Activated naive CD4-positive, alpha-beta T cell treated with anti-CD3 and anti-CD28 coated beads for 36 hours (primary cell): ENCODE measurements at regions of chr3 and their contacts with region 1.

Region 1: DNA sequence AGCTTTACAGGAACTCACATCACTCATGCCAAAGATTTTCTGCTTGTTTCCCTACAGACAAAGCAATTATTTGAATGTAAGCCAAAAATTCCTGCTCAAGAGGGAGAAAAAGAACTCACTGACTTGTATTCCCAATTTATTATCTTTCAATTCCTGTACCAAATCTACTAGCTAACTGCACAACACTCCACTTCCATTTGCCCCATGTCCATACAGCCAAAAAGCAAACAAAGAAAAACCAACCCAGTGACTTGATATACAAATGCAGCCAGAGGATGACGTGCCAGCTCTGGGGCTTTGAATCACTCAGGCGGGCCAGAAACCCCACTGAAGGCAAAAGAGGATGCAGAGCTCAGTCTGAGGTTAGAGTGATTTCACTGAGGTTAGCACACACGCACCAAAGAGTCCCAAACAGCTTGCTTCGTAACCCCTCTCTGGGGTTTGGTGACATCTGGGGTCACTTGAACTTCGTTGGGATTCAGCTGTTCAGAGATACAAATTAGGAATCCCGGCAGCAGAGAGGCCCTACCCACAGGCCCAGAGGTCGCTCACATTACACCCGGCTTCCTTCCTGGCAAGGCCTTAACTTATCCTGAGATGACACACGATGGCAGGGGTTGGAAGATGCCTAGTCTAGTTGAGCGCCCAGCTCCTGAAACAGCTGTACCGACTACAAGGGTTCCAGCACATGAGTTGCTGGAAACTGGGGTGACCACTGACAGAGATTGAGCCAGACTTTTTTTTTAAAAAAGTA is 1.6 kb downstream of the RFTN1 start:
- DNase-seq: peak; percentile 95
- H3K4me3 Mint-ChIP-seq: peak overlapping the region; percentile 92
- H3K27ac Mint-ChIP-seq: peak overlapping the region; percentile 100
- H3K4me1 Mint-ChIP-seq: peaks cover 73% of the 10 kb centered on the region
- H3K27me3 Mint-ChIP-seq: no peaks in the 10 kb centered on the region

Region 2: GRCh38 chr3:15361494-15362212 is 1150.2 kb before region 1 on chr3:
- CTCF ChIA-PET with region 1: no interaction called
- intact Hi-C with region 1: loop called (anchors 2 kb)
- DNase-seq: peak; percentile 86
- H3K4me3 Mint-ChIP-seq: no peak overlapping the region
- H3K27ac Mint-ChIP-seq: peak overlapping the region; percentile 83
- H3K4me1 Mint-ChIP-seq: peaks cover 42% of the 10 kb centered on the region
- H3K27me3 Mint-ChIP-seq: peaks cover 2% of the 10 kb centered on the region

Region 3: DNA sequence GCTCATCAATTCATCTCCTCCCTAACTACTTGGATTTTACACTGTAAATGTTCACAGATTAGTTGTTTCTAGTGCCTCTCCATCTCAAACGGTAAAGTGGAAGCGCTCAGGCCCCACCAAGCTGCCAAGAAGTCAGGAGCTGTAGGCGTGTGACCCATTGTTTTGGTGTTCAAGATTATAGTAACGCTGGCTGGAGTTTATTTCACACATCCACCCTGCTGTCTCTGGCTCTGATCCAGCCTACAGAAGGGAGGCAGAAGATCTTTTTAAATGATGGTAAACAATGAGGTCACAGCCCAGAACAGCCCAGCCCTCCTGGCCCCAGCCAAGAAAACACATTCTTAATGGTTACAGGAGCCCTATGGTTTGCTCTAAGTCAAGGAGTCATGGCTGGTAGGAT is 363.1 kb before region 1 on chr3:
- CTCF ChIA-PET with region 1: no interaction called
- intact Hi-C with region 1: no loop called
- DNase-seq: no peak
- H3K4me3 Mint-ChIP-seq: no peak overlapping the region
- H3K27ac Mint-ChIP-seq: no peak overlapping the region
- H3K4me1 Mint-ChIP-seq: peaks cover 5% of the 10 kb centered on the region
- H3K27me3 Mint-ChIP-seq: peaks cover 4% of the 10 kb centered on the region

Region 4: DNA sequence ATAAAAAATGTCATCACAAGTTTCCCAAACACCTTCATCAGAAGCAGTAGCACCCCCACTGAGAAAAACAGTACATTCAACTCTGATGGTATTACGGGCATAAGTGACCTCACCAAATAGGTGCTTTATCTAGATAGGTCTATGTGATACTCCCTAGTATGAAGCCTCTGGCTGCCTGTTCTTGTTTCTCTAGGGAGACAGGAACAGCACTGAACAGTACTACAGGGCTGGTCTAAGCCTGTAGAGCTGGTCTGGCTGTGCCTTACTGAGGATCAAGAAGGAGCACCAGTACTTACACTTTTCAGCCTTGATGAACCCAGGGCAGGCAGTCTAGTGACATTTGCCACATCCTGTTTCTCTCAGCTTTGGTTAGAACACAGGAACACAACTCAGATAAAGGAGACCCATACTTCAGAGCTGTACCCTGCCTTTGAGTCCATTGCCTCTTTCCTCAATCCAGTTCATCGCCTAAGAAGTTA is 210.9 kb before region 1 on chr3:
- CTCF ChIA-PET with region 1: interaction called, 5 read pairs
- intact Hi-C with region 1: loop called (anchors 1 kb)
- DNase-seq: peak; percentile 58
- H3K4me3 Mint-ChIP-seq: peak overlapping the region; percentile 62
- H3K27ac Mint-ChIP-seq: peak overlapping the region; percentile 94
- H3K4me1 Mint-ChIP-seq: peaks cover 97% of the 10 kb centered on the region
- H3K27me3 Mint-ChIP-seq: no peaks in the 10 kb centered on the region

Region 5: GRCh38 chr3:16378920-16379319 is 132.9 kb before region 1 on chr3:
- CTCF ChIA-PET with region 1: interaction called, 3 read pairs
- intact Hi-C with region 1: loop called (anchors 1 kb)
- DNase-seq: peak; percentile 44
- H3K4me3 Mint-ChIP-seq: no peak overlapping the region
- H3K27ac Mint-ChIP-seq: peak overlapping the region; percentile 80
- H3K4me1 Mint-ChIP-seq: peaks cover 82% of the 10 kb centered on the region
- H3K27me3 Mint-ChIP-seq: no peaks in the 10 kb centered on the region

Region 6: GRCh38 chr3:16496408-16497222 is 15.2 kb before region 1 on chr3:
- CTCF ChIA-PET with region 1: interaction called, 4 read pairs
- intact Hi-C with region 1: loop called (anchors 1 kb)
- DNase-seq: peak; percentile 60
- H3K4me3 Mint-ChIP-seq: peak overlapping the region; percentile 1
- H3K27ac Mint-ChIP-seq: peak overlapping the region; percentile 46
- H3K4me1 Mint-ChIP-seq: peaks cover 56% of the 10 kb centered on the region
- H3K27me3 Mint-ChIP-seq: no peaks in the 10 kb centered on the region

Region 7: DNA sequence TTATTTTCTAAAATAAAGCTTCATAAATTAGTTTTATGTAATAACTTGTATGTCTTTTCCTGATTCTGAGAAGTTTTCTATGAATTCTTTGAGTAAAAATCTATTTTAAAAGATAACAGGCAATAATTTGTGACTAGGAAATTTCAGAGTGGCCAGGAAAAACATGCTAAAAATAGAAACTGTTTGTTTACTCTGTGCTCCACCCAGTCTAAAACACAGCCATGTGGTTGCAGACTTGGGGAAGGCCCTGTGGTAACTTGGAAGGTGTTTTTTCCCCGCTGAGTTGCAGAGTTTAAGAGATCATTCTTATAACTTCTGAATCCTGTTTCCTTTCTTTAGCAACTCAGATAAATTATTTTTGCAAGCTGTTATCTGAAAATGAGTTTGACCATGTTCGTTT is 394.8 kb after region 1 on chr3:
- CTCF ChIA-PET with region 1: no interaction called
- intact Hi-C with region 1: loop called (anchors 5 kb)
- DNase-seq: peak; percentile 43
- H3K4me3 Mint-ChIP-seq: no peak overlapping the region
- H3K27ac Mint-ChIP-seq: no peak overlapping the region
- H3K4me1 Mint-ChIP-seq: peaks cover 78% of the 10 kb centered on the region
- H3K27me3 Mint-ChIP-seq: no peaks in the 10 kb centered on the region